Cardiac septum (tissue), 1 donor: ENCODE measurements at regions of chr10 and their contacts with region 1.

Region 1: GRCh38 chr10:72364239-72364777 is 9.6 kb upstream of the DNAJB12 start:
- DNase-seq: peak; percentile 95

Region 2: GRCh38 chr10:72254813-72255568 is 109.3 kb before region 1 on chr10:
- intact Hi-C with region 1: no loop called
- DNase-seq: peak; percentile 89

Region 3: DNA sequence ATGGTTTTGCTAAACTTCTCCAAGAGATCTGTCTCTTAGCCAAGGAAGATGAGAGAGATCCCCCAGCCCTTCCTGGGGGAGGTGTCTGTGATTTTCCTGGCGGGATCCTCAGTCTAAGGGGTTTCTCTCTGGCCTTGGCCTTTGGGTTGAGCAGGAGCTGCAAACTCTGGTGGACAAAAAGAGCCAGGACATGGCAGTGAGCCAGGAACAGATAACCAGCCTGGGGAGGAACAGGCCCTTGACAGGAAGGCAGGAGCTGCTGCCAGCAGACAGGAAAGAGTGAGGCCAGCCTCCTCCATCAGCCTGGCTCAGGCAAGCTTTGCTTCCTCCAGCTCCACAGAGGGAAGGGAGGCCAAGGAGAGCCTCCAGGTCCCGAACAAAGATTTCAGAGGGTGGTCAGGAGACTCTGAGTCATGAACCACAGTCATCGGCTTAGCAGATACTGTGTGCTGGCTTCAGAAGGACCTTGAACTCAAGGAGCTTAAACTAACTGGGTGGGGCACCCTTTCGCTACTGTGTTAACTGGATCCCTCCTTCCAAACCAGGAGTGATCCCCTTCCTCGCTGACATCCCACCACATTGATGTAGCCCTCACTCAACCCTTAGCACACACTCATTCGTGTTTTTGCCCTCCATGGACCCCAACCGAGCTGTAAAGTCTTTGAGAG is 55.9 kb before region 1 on chr10:
- intact Hi-C with region 1: no loop called
- DNase-seq: no peak

Region 4: GRCh38 chr10:72834183-72834825 is 470.0 kb after region 1 on chr10:
- intact Hi-C with region 1: loop called (anchors 2 kb)
- DNase-seq: no peak

Region 5: GRCh38 chr10:72875250-72876055 is 511.1 kb after region 1 on chr10:
- intact Hi-C with region 1: loop called (anchors 5 kb)
- DNase-seq: no peak

Region 6: GRCh38 chr10:73159038-73159648 is 794.8 kb after region 1 on chr10:
- intact Hi-C with region 1: loop called (anchors 10 kb)
- DNase-seq: no peak